ENCODE measurements at regions of chr14 and their contacts with region 1.

Region 1: DNA sequence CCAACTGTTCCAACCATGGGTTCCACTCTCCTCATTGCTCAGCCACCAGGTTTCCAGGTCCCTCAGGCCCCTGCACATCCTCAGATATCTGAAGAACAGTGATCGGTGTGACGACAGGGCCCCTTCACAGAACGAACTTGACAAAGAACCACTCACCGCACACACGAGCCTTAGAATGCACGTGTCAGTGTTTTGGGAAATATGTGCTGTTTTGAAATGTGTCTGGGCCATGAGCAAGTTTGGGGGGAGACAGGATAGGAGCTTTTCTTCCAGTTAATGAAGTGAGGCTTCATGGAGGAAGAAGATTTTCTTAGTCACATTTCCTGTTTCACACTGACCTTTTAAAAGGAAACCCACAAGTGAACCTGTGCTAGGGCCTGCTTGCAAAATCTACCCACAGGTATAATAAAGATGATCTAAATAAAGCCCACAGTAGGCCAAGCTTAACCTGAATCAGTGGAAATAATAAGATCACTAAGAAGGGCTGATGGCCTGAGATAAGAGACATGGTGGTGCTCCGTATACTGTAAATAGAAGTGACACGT is 58.6 kb downstream of the ZFP36L1 start:
- DNase-seq: peak; percentile 48
- ATAC-seq: peak; percentile 43
- H3K4me3 ChIP-seq: no peak overlapping the region
- H3K27ac ChIP-seq: no peak overlapping the region
- H3K4me1 ChIP-seq: peaks cover 15% of the 10 kb centered on the region
- H3K27me3 ChIP-seq: no peaks in the 10 kb centered on the region
- CTCF ChIP-seq: no peak
- EP300 ChIP-seq: no peak
- POLR2A ChIP-seq: no peak
- RAD21 ChIP-seq: no peak

Region 2: GRCh38 chr14:68695326-68695768 is 39.0 kb before region 1 on chr14:
- CTCF ChIA-PET with region 1: no interaction called
- POLR2A ChIA-PET with region 1: no interaction called
- RAD21 ChIA-PET with region 1: interaction called, 3 read pairs
- SMC1A ChIA-PET with region 1: interaction called, 3 read pairs
- in situ Hi-C with region 1: no loop called
- intact Hi-C with region 1: loop called (anchors 5 kb)
- DNase-seq: peak; percentile 80
- ATAC-seq: peak; percentile 98
- H3K4me3 ChIP-seq: no peak overlapping the region
- H3K27ac ChIP-seq: no peak overlapping the region
- H3K4me1 ChIP-seq: peaks cover 18% of the 10 kb centered on the region
- H3K27me3 ChIP-seq: no peaks in the 10 kb centered on the region
- CTCF ChIP-seq: no peak
- EP300 ChIP-seq: peak; percentile 79 to 86
- POLR2A ChIP-seq: no peak
- RAD21 ChIP-seq: peak; percentile 25; the same call in 1 of the 2 replicates

Region 3: DNA sequence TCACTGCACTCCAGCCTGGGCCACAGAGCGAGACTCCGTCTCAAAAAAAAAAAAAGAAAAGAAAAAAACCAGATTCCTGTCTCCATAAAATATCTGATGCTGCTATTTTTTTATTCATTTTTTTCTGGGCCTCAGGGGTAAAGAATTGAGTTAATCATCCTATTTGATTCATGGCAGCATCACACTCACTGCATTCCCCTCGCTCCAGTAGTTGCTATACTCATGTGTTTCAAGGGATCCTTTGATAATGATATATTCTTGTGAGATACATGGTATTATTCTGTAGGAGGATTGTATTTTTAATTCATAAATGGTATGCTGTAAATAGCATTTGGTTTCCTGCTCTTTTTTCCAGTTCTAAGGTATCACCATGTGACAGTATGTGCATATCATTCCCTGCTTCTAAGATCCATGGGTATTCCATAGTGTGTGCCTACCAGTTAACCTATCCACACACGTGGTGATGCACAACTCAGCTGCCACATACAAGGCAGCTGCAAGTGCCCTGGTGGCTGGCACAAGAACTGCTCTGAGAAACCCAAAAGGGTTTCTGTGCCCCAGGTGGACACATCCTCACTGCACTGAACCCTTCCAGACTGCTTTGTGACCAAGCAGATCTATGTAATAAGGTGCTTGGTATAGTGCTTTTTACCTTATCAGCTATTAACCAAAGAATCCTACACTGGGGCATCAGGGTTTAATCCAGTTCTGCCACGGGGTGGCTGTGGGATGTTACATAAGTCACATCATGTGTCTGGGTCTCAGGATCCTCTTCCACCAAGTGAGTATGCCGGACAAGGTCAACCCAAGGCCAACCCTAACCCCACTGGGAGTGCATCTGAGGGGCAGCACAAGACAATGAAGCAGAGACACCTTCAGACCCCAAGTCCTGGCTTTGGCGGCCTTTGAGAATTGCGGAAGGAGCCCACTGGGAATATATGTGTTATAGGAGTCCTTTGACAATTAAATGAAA is 16.0 kb before region 1 on chr14:
- CTCF ChIA-PET with region 1: interaction called, 3 read pairs
- POLR2A ChIA-PET with region 1: interaction called, 5 read pairs
- RAD21 ChIA-PET with region 1: interaction called, 7 read pairs
- SMC1A ChIA-PET with region 1: interaction called, 26 read pairs
- in situ Hi-C with region 1: no loop called
- intact Hi-C with region 1: no loop called
- DNase-seq: no peak
- ATAC-seq: peak; percentile 86
- H3K4me3 ChIP-seq: no peak overlapping the region
- H3K27ac ChIP-seq: no peak overlapping the region
- H3K4me1 ChIP-seq: no peaks in the 10 kb centered on the region
- H3K27me3 ChIP-seq: no peaks in the 10 kb centered on the region
- CTCF ChIP-seq: peak in 2 of 3 experiments; percentile 42 to 51; a peak in 4 of 6 replicates
- EP300 ChIP-seq: no peak
- POLR2A ChIP-seq: no peak
- RAD21 ChIP-seq: 0 out of 2 replicates have a peak, but pooled peaks have one; percentile 17

Region 4: DNA sequence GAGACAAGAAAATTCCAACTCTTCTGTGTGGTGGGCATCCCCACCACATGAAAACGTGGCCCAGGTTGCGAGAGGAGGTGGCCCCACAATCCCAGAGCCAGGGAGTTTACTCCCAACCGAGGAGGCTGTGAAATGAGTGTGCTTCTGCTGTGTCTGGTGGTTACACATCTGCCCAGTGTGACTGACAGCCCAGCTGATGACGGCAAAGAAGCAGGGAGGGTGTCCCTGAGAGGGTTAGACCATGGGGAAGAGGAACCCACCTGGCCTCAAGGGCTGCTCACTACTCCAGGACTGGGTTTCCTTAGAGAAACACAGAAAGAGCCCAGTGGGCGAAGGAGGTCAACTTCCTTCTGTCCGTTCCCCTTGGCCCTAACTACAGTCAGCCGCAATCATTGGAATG is 34.0 kb after region 1 on chr14:
- CTCF ChIA-PET with region 1: no interaction called
- POLR2A ChIA-PET with region 1: no interaction called
- RAD21 ChIA-PET with region 1: no interaction called
- SMC1A ChIA-PET with region 1: no interaction called
- in situ Hi-C with region 1: no loop called
- intact Hi-C with region 1: no loop called
- DNase-seq: no peak
- ATAC-seq: no peak
- H3K4me3 ChIP-seq: no peak overlapping the region
- H3K27ac ChIP-seq: no peak overlapping the region
- H3K4me1 ChIP-seq: no peaks in the 10 kb centered on the region
- H3K27me3 ChIP-seq: no peaks in the 10 kb centered on the region
- CTCF ChIP-seq: no peak
- EP300 ChIP-seq: no peak
- POLR2A ChIP-seq: no peak
- RAD21 ChIP-seq: no peak

Region 5: GRCh38 chr14:68995731-68996130 is 261.4 kb after region 1 on chr14:
- CTCF ChIA-PET with region 1: no interaction called
- POLR2A ChIA-PET with region 1: no interaction called
- RAD21 ChIA-PET with region 1: no interaction called
- SMC1A ChIA-PET with region 1: no interaction called
- in situ Hi-C with region 1: no loop called
- intact Hi-C with region 1: no loop called
- DNase-seq: no peak
- ATAC-seq: no peak
- H3K4me3 ChIP-seq: no peak overlapping the region
- H3K27ac ChIP-seq: no peak overlapping the region
- H3K4me1 ChIP-seq: no peaks in the 10 kb centered on the region
- H3K27me3 ChIP-seq: no peaks in the 10 kb centered on the region; a peak in 1 of 4 replicates
- CTCF ChIP-seq: no peak
- EP300 ChIP-seq: no peak
- POLR2A ChIP-seq: no peak
- RAD21 ChIP-seq: no peak

Measured in GM12878 (cell line).